Activated B cell treated with CpG ODN at 0.5 μM for 24 hours (primary cell): ENCODE measurements at regions of chr4 and their contacts with region 1.

Region 1: GRCh38 chr4:39697740-39698423 is at the start of gene UBE2K:
- DNase-seq: peak; percentile 93
- ATAC-seq: peak; percentile 89
- H3K4me3 Mint-ChIP-seq: peak within 1 kb of the TSS; percentile 99
- H3K27ac Mint-ChIP-seq: peak within 1 kb of the TSS; percentile 96
- H3K4me1 Mint-ChIP-seq: peaks cover 48% of the 10 kb centered on the region
- H3K27me3 Mint-ChIP-seq: no peaks in the 10 kb centered on the region
- CTCF ChIP-seq: no peak
- total RNA-seq, gene UBE2K: 54.4 and 64.0 TPM in 2 replicates

Region 2: GRCh38 chr4:39469429-39470077 is 228.3 kb before region 1 on chr4:
- CTCF ChIA-PET with region 1: interaction called, 5 read pairs
- POLR2A ChIA-PET with region 1: interaction called, 6 read pairs
- intact Hi-C with region 1: loop called (anchors 1 kb)
- DNase-seq: no peak
- ATAC-seq: peak; percentile 99
- H3K4me3 Mint-ChIP-seq: peak overlapping the region; percentile 59
- H3K27ac Mint-ChIP-seq: peak overlapping the region; percentile 88
- H3K4me1 Mint-ChIP-seq: peaks cover 8% of the 10 kb centered on the region
- H3K27me3 Mint-ChIP-seq: no peaks in the 10 kb centered on the region
- CTCF ChIP-seq: peak; percentile 74

Region 3: GRCh38 chr4:39609454-39609931 is 88.4 kb before region 1 on chr4:
- CTCF ChIA-PET with region 1: no interaction called
- POLR2A ChIA-PET with region 1: interaction called, 11 read pairs
- intact Hi-C with region 1: loop called (anchors 5 kb)
- DNase-seq: no peak
- ATAC-seq: peak; percentile 84
- H3K4me3 Mint-ChIP-seq: peak overlapping the region; percentile 75
- H3K27ac Mint-ChIP-seq: peak overlapping the region; percentile 88
- H3K4me1 Mint-ChIP-seq: peaks cover 67% of the 10 kb centered on the region
- H3K27me3 Mint-ChIP-seq: no peaks in the 10 kb centered on the region
- CTCF ChIP-seq: no peak

Region 4: DNA sequence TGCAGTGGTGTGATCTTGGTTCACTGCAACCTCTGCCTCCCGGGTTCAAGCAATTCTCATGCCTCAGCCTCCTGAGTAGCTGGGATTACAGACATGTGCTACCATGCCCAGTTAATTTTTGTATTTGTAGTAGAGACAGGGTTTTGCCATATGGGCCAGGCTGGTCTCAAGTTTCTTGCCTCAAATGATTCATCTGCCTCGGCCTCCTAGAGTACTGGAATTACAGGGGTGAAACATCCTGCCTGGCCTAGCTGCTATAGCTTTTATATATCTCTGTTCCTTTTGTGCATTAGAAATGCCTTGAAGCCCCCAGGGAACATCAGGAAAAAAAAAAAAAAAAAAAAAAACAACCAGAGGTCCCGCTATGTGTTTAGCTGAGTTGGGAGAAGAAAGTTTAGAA is 34.8 kb after region 1 on chr4:
- CTCF ChIA-PET with region 1: no interaction called
- POLR2A ChIA-PET with region 1: interaction called, 4 read pairs
- intact Hi-C with region 1: loop called (anchors 5 kb)
- DNase-seq: no peak
- ATAC-seq: no peak
- H3K4me3 Mint-ChIP-seq: no peak overlapping the region
- H3K27ac Mint-ChIP-seq: no peak overlapping the region
- H3K4me1 Mint-ChIP-seq: peaks cover 28% of the 10 kb centered on the region
- H3K27me3 Mint-ChIP-seq: no peaks in the 10 kb centered on the region
- CTCF ChIP-seq: no peak

Region 5: DNA sequence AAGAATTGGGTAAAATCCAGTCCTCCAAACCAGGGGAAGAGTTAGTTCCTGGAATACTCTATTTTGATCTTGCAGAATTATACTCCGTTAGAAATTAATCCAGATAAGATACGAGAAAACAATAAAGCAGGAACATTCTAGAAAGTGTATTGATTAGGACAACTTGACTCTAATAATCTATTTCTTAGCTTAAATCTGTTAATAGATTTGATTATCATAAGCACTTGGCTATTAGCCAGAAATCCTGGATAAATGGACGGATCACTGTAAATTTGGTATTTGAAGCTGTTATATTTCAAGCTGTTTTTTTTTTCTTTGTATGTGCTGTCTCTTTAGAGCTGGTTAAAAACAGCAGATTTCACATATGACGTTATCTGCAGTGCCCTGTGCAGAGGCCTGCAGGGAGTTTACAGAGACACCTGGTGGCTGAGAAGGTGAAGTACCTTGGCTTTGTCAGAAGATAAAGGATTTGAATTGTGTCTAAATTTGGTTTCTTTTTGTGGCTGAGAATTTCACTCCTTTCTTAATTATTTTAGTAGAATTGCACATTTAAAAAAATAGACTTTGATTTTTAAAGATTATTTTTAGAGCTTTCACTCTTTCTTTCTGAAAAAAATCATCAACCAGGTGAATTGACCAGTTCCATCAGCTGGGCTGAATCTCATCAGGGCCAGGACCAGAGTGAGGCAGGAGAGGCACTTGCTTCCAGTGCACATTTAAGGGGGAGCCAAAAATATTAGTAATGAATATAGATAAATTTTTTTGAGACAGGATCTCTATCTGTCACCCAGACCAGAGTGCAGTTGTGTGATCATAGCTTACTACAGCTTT is 627.5 kb after region 1 on chr4:
- CTCF ChIA-PET with region 1: no interaction called
- POLR2A ChIA-PET with region 1: no interaction called
- intact Hi-C with region 1: loop called (anchors 5 kb)
- DNase-seq: no peak
- ATAC-seq: peak; percentile 100
- H3K4me3 Mint-ChIP-seq: no peak overlapping the region
- H3K27ac Mint-ChIP-seq: no peak overlapping the region
- H3K4me1 Mint-ChIP-seq: peaks cover 14% of the 10 kb centered on the region
- H3K27me3 Mint-ChIP-seq: peaks cover 5% of the 10 kb centered on the region
- CTCF ChIP-seq: no peak